Endothelial cell of umbilical vein (primary cell): ENCODE measurements at regions of chr4 and their contacts with region 1.

Region 1: DNA sequence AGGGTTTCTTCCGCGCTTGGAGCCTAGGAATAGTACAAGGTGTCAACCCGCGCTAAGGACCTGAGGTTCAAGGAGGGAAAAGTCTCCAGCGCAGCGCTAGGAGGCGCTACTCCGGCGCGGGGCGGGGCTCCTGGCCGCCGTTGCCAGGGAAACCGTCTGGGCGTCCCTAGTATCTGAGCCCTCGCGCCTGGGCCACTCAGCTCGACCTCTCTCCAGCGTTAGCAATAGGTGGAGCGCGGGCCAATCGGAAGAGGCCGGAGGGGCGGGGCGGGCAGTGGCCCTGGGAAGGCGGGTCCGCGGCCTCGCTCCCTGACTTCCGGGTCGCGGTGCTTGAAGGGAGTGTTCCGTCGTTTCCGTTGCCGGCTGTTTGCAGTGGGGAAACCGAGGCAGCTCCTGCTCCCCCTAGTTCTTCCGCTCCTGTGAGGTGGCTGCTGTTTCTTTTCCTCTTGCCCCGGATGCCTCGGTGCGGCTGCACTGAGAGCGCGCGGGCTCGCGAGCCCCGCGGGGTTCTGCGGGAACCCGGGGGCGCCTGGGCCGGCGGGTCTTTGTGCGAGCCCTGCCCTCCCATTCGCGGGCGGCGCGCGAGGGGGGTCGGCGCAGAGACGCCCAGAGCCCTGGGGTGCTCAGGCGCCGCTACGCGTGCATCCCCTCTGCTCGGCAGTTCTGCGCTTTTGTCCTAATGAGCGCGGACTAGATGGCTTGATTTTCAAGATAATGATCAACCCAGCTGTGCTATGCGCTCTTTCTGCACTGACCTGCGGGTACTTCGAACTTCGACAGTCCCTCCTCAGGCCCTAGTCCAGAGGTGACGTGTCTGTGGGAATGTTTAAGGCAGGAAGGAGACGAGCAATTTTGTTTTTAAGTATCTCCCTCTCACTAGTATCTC is at the start of gene ELMOD2:
- DNase-seq: peak; percentile 97
- H3K4me3 ChIP-seq: peak within 1 kb of the TSS; percentile 38 to 87 (median 83)
- H3K27ac ChIP-seq: peak within 1 kb of the TSS; percentile 21
- H3K4me1 ChIP-seq: peaks cover 14% of the 10 kb centered on the region
- H3K27me3 ChIP-seq: peaks cover 0 to 2% of the 10 kb centered on the region in 2 experiments
- CTCF ChIP-seq: peak; percentile 97 to 99
- POLR2A ChIP-seq: peak; percentile 80
- total RNA-seq, gene ELMOD2: 20.5 and 23.6 TPM in 2 replicates

Region 2: DNA sequence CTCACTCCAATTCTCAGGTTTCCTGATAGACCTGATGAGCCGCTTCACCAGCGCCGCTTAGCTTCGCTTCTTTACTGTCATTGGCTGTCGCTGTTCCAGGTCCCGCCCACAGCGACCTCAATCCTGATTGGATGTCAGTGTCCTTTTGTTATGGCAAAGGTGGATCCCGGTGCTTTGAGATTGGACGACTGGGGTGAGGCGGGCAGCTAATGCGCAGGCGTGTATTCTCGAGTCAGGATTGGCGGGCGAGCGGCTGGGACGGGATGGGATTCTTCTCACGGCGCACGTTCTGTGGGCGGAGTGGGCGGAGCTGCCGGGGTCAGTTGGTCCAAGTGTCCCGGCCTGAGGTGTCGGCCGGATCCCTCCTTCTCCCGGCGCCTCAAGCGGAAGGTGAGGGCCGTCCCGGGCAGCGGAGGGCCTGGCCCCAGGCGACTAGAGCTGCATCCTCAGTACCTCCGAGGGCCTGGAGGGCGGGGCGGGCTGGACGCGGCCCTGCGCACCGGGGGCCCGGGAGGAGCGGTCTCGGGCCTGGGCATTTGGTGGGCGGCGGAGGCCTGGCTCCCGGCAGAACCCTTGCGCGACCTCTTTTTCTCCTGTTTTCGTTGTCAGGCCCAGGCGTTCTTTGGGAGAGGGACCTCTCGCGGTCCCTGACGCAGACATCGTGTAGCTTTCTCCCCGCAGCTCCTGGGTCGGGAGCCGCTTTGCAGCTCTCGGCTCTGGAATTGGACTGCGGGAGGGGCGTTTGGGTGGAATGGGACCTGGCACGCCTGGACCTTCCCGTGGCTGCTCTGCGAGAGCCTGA is 150.6 kb before region 1 on chr4 and contains the start of gene SCOC:
- CTCF ChIA-PET with region 1: interaction called, 6 read pairs
- POLR2A ChIA-PET with region 1: interaction called, 4 read pairs
- dilution Hi-C with region 1: no loop called
- intact Hi-C with region 1: loop called (anchors 1 kb)
- DNase-seq: peak; percentile 100
- H3K4me3 ChIP-seq: peak within 1 kb of the TSS; percentile 76 to 92 (median 79)
- H3K27ac ChIP-seq: peak within 1 kb of the TSS; percentile 71
- H3K4me1 ChIP-seq: peaks cover 14% of the 10 kb centered on the region
- H3K27me3 ChIP-seq: no peaks in the 10 kb centered on the region
- CTCF ChIP-seq: no peak
- POLR2A ChIP-seq: peak; percentile 80
- total RNA-seq, gene SCOC: 38.3 and 38.5 TPM in 2 replicates

Region 3: DNA sequence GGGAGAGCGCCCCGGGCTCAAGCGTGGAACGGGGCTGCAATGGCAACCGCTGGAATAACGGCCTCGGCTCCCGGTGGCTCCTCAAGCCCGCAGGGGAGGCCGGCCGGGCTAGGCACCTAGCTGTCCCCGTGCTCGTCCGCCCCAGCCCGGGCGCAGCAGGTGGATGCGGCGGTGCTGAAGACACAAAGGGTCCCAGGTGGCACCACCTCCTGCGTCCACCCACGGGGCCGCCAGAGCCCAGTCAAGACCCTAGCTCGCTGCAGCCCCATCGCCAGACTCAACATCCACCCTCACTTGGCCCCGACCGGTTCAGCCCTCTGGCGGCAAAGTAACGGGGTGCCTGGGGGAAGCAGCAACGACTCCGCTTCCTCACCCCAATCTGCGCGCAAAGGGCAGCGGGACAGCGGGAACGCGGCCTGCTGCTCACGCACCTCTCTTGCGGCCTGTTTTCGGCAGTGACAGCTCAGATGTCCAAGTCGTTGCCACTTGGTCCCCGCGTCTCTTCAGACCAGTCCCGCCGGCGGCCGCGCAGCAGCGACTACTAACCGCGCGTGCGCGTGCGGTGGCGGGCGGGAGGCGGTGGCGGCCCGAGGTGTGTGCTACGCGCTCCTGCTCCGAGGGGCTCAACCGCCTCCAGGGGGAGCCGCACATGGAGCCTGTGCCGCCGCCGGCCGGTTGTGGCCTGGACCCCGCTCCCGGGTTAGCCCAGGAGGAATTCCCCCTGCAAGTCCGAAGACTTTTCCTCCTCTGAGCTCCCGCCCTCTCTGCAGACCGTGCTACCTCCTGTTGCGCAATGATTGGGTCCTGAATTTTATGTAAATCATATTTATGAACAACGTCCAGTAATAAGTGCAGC is 96.8 kb before region 1 on chr4 and contains the start of gene CLGN:
- CTCF ChIA-PET with region 1: interaction called, 4 read pairs
- POLR2A ChIA-PET with region 1: no interaction called
- dilution Hi-C with region 1: no loop called
- intact Hi-C with region 1: loop called (anchors 1 kb)
- DNase-seq: peak; percentile 78
- H3K4me3 ChIP-seq: peak within 1 kb of the TSS; percentile 30 to 64 (median 48)
- H3K27ac ChIP-seq: no peak within 1 kb of the TSS
- H3K4me1 ChIP-seq: peaks cover 9% of the 10 kb centered on the region
- H3K27me3 ChIP-seq: peaks cover 14 to 34% of the 10 kb centered on the region in 2 experiments
- CTCF ChIP-seq: peak; percentile 58 to 68
- POLR2A ChIP-seq: no peak
- total RNA-seq, gene CLGN: 0.60 and 1.00 TPM in 2 replicates

Region 4: GRCh38 chr4:141133146-141133998 is 609.3 kb after region 1 on chr4 and contains the start of gene RNF150:
- CTCF ChIA-PET with region 1: no interaction called
- POLR2A ChIA-PET with region 1: no interaction called
- dilution Hi-C with region 1: no loop called
- intact Hi-C with region 1: loop called (anchors 1 kb)
- DNase-seq: peak; percentile 79
- H3K4me3 ChIP-seq: peak within 1 kb of the TSS; percentile 51 to 79 (median 56)
- H3K27ac ChIP-seq: no peak within 1 kb of the TSS
- H3K4me1 ChIP-seq: peaks cover 3% of the 10 kb centered on the region
- H3K27me3 ChIP-seq: peaks cover 29 to 62% of the 10 kb centered on the region in 2 experiments
- CTCF ChIP-seq: peak; percentile 54 to 64
- POLR2A ChIP-seq: no peak
- total RNA-seq, gene RNF150: 0.30 and 0.33 TPM in 2 replicates